A673 (cell line): ENCODE measurements at regions of chr14 and their contacts with region 1.

Region 1: DNA sequence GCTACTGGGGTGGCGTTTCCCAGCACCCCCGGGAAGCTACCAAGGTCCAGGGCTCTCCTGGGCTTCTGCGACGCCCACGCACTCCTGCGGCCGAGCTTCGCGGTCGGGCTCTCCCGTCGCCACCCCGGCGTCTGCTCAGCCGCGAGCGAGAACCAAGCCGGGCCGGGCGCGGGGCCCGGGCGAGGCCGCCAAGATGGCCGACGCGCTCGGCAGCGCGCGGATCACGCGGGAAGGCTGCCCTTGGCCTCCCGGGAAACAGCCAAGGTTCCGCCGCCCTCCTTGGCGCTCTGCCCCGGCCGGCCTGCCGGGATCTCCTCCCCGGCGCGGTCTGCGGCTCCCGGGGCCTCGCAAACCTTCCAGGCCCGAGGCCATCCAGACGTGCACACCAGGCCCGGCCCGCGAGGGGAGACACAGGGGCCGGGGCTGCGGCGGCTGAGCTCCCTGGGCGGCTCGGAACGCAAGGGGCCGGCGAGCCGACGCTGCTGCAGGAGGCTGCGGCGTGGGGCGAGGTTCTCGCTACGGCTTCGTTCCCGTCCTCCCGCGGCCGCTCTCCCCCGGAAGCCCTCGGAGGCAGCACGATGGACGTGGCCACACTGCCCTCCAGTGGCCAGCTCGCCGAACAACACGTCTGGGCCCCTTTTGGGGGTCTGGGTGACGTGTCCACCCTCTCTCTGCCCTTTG is 23.5 kb upstream of the ZFP36L1 start:
- DNase-seq: peak; percentile 95
- H3K4me3 ChIP-seq: peak overlapping the region; percentile 47
- H3K27ac ChIP-seq: peak overlapping the region; percentile 95
- H3K4me1 ChIP-seq: peaks cover 24% of the 10 kb centered on the region
- H3K27me3 ChIP-seq: no peaks in the 10 kb centered on the region
- CTCF ChIP-seq: peak; percentile 96

Region 2: GRCh38 chr14:67837011-67837624 is 979.3 kb before region 1 on chr14:
- CTCF ChIA-PET with region 1: no interaction called
- POLR2A ChIA-PET with region 1: interaction called, 5 read pairs
- intact Hi-C with region 1: loop called (anchors 5 kb)
- DNase-seq: peak; percentile 78
- H3K4me3 ChIP-seq: no peak overlapping the region
- H3K27ac ChIP-seq: no peak overlapping the region
- H3K4me1 ChIP-seq: no peaks in the 10 kb centered on the region
- H3K27me3 ChIP-seq: no peaks in the 10 kb centered on the region
- CTCF ChIP-seq: peak; percentile 71

Region 3: DNA sequence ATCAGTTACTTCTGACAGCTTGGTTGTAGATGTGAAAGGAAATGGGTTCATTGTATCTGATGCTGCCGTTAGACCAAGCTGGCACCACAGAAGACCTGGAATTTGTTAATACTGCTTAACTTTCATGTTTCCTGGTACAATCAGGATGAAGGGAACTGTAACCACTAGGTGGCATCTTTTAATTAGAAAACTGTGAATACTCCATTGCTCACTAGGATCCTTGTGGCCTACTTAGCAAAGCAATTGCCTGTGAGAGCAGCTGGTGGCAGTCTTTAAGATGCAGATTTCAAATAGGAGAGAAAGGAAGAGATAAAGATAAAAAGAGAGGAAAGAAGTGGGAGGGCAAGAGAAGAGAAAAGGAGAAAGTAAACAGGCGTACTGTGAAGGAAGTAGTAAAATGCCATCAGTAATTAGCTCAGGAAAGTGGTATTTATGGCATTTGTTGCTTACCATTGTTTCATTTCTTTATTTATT is 882.4 kb before region 1 on chr14:
- CTCF ChIA-PET with region 1: interaction called, 5 read pairs
- POLR2A ChIA-PET with region 1: no interaction called
- intact Hi-C with region 1: loop called (anchors 2 kb)
- DNase-seq: peak; percentile 94
- H3K4me3 ChIP-seq: no peak overlapping the region
- H3K27ac ChIP-seq: no peak overlapping the region
- H3K4me1 ChIP-seq: peaks cover 23% of the 10 kb centered on the region
- H3K27me3 ChIP-seq: peaks cover 12% of the 10 kb centered on the region
- CTCF ChIP-seq: peak; percentile 85

Region 4: GRCh38 chr14:67943947-67944346 is 872.5 kb before region 1 on chr14:
- CTCF ChIA-PET with region 1: interaction called, 10 read pairs
- POLR2A ChIA-PET with region 1: interaction called, 5 read pairs
- intact Hi-C with region 1: loop called (anchors 2 kb)
- DNase-seq: peak; percentile 86
- H3K4me3 ChIP-seq: no peak overlapping the region
- H3K27ac ChIP-seq: no peak overlapping the region
- H3K4me1 ChIP-seq: no peaks in the 10 kb centered on the region
- H3K27me3 ChIP-seq: no peaks in the 10 kb centered on the region
- CTCF ChIP-seq: peak; percentile 85

Region 5: DNA sequence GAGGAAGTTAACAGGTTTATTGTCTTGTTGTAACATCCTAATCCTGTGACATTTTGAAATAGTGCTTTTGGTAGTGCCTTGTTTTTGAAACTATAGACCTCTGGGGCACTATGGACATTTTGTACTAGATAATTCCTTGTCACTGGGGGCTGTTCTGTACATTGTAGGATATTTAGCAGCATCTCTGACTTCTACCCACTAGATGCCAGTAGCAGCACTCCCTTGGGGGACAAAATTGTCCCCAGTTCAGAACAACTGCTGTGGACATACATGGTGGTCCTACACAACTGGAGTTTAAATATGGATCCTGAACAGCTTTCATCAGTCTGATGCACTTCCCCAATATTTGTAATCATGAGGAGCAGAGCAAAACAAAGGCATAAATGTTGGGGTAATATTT is 732.1 kb before region 1 on chr14:
- CTCF ChIA-PET with region 1: no interaction called
- POLR2A ChIA-PET with region 1: no interaction called
- intact Hi-C with region 1: loop called (anchors 10 kb)
- DNase-seq: peak; percentile 51
- H3K4me3 ChIP-seq: no peak overlapping the region
- H3K27ac ChIP-seq: no peak overlapping the region
- H3K4me1 ChIP-seq: peaks cover 14% of the 10 kb centered on the region
- H3K27me3 ChIP-seq: no peaks in the 10 kb centered on the region
- CTCF ChIP-seq: peak; percentile 53

Region 6: GRCh38 chr14:68663385-68664076 is 152.9 kb before region 1 on chr14:
- CTCF ChIA-PET with region 1: no interaction called
- POLR2A ChIA-PET with region 1: no interaction called
- intact Hi-C with region 1: no loop called
- DNase-seq: no peak
- H3K4me3 ChIP-seq: no peak overlapping the region
- H3K27ac ChIP-seq: no peak overlapping the region
- H3K4me1 ChIP-seq: peaks cover 35% of the 10 kb centered on the region
- H3K27me3 ChIP-seq: no peaks in the 10 kb centered on the region
- CTCF ChIP-seq: no peak

Region 7: GRCh38 chr14:68987653-68988036 is 171.2 kb after region 1 on chr14:
- CTCF ChIA-PET with region 1: no interaction called
- POLR2A ChIA-PET with region 1: no interaction called
- intact Hi-C with region 1: no loop called
- DNase-seq: peak; percentile 46
- H3K4me3 ChIP-seq: no peak overlapping the region
- H3K27ac ChIP-seq: no peak overlapping the region
- H3K4me1 ChIP-seq: no peaks in the 10 kb centered on the region
- H3K27me3 ChIP-seq: no peaks in the 10 kb centered on the region
- CTCF ChIP-seq: no peak